Transverse colon (tissue), 4 donors: ENCODE measurements at regions of chr1 and their contacts with region 1.

Region 1: DNA sequence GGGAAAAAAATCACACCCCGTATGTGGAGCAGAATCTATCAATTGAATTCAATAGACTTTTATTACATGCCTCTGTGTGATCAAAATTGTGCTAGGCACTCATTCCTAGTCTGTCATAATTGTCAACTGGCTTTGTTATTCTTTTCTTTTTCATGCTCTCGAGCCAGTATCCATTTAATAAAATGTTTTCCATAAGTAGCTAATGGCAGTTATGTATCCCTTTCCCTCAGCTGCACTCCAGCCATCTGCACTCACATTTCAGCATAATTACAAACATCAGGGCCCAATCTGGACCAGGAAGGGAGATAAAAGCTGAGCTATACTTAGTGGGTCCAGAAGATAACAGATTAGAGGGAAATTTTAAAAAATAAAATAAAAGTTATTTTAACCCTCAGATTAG is 15.9 kb downstream of the RGS5 start:
- DNase-seq: no peak
- H3K4me3 ChIP-seq: no peak overlapping the region
- H3K27ac ChIP-seq: no peak overlapping the region
- H3K4me1 ChIP-seq: no peaks in the 10 kb centered on the region
- H3K27me3 ChIP-seq: no peaks in the 10 kb centered on the region
- CTCF ChIP-seq: no peak
- EP300 ChIP-seq: no peak
- POLR2A ChIP-seq: no peak

Region 2: GRCh38 chr1:162905174-162906158 is 281.4 kb before region 1 on chr1:
- in situ Hi-C with region 1: no loop called
- intact Hi-C with region 1: no loop called
- DNase-seq: no peak
- H3K4me3 ChIP-seq: no peak overlapping the region
- H3K27ac ChIP-seq: no peak overlapping the region
- H3K4me1 ChIP-seq: no peaks in the 10 kb centered on the region
- H3K27me3 ChIP-seq: no peaks in the 10 kb centered on the region
- CTCF ChIP-seq: no peak
- EP300 ChIP-seq: no peak
- POLR2A ChIP-seq: no peak

Region 3: DNA sequence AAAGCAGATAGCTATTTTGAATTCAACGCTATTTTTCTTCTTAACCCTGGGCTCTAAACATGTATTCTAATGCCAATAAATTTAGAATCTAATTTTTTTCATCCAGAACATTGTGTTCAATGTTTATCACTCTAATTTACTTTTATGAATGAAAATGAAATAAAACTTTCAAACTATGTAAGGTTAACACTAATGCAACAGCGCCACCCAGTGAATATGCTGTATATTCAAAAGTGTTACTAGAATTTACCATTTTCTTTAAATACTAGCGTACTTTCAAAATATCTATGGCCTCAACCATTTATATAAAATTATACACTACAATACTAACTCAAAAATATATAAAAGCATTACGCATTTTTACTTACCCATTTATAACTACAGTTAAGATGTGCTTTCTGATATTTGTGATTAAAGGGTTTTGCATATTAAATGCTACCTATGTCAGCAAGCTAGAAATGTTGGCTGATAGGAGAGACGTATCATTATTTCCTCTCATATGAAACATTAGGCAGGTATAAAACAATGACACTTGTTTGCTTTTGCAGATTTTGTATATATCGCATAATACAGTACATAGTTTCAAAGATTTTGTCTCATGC is 129.0 kb after region 1 on chr1:
- in situ Hi-C with region 1: no loop called
- intact Hi-C with region 1: loop called (anchors 10 kb)
- DNase-seq: peak; percentile 16
- H3K4me3 ChIP-seq: no peak overlapping the region
- H3K27ac ChIP-seq: no peak overlapping the region
- H3K4me1 ChIP-seq: peaks cover 0 to 3% (median 2%) of the 10 kb centered on the region in 4 donors
- H3K27me3 ChIP-seq: no peaks in the 10 kb centered on the region
- CTCF ChIP-seq: peak; percentile 57 to 69 (median 66)
- EP300 ChIP-seq: no peak
- POLR2A ChIP-seq: no peak

Region 4: GRCh38 chr1:163414778-163415177 is 227.9 kb after region 1 on chr1:
- in situ Hi-C with region 1: no loop called
- intact Hi-C with region 1: no loop called
- DNase-seq: no peak
- H3K4me3 ChIP-seq: no peak overlapping the region
- H3K27ac ChIP-seq: no peak overlapping the region
- H3K4me1 ChIP-seq: no peaks in the 10 kb centered on the region
- H3K27me3 ChIP-seq: no peaks in the 10 kb centered on the region
- CTCF ChIP-seq: no peak
- EP300 ChIP-seq: no peak
- POLR2A ChIP-seq: no peak